Activated T-helper 1 cell treated with anti-CD3 and anti-CD28 coated beads, Interleukin-12 subunit alpha, Interleukin-12 subunit beta, Interleukin-2, Interleukin-4 antibody, amounts not matched to agents 30 ng/mL and 10 ng/mL and 1 ng/mL, durations not matched to agents 14 hours and 24 hours and 36 hours (primary cell): ENCODE measurements at regions of chr15 and their contacts with region 1.

Region 1: GRCh38 chr15:90869601-90870353 is 1.4 kb downstream of the FURIN start:
- DNase-seq: peak; percentile 61
- H3K4me3 Mint-ChIP-seq: peak overlapping the region; percentile 94
- H3K27ac Mint-ChIP-seq: peak overlapping the region; percentile 95
- H3K4me1 Mint-ChIP-seq: peaks cover 62% of the 10 kb centered on the region
- H3K27me3 Mint-ChIP-seq: no peaks in the 10 kb centered on the region

Region 2: DNA sequence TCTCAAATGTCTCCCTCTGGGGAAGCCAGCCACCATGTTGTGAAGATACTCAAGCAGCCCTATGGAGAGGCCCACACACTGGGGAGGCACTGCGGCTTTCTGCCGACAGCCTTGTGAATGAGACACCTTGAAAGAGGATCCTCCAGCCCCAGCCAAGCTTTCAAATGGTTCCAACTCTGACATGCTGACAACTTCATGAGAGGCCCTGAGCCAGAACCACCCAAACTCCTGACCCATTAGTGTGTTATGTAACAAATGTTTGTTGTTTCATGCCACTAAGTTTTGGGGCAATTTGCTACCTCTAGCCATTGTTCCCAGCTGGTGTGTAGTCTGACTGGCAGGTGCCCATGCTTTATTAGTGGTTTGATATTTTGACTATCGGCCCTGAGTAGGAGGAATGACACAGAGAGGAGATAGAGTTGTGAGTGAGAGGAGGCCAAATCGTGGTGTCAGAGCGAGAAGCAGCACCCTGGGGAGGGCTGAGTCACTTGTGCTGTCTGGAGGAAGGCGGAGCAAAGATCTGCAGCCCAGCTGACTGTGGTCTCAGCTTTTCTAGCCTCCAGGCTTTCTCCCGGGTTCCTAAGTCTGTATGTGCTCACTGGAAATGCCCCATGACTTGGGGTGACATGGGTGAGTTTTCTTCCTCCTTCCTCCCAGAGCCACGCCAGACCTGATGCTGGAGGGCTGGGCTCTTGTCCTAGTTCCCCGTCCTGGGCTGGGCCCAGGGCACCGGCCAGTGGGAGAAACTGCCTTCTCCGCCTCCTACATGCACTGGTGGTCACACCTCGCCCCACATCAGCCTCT is 209.4 kb before region 1 on chr15:
- intact Hi-C with region 1: loop called (anchors 1 kb)
- DNase-seq: peak; percentile 71
- H3K4me3 Mint-ChIP-seq: peak overlapping the region; percentile 77
- H3K27ac Mint-ChIP-seq: peak overlapping the region; percentile 96
- H3K4me1 Mint-ChIP-seq: peaks cover 81% of the 10 kb centered on the region
- H3K27me3 Mint-ChIP-seq: peaks cover 1% of the 10 kb centered on the region

Region 3: DNA sequence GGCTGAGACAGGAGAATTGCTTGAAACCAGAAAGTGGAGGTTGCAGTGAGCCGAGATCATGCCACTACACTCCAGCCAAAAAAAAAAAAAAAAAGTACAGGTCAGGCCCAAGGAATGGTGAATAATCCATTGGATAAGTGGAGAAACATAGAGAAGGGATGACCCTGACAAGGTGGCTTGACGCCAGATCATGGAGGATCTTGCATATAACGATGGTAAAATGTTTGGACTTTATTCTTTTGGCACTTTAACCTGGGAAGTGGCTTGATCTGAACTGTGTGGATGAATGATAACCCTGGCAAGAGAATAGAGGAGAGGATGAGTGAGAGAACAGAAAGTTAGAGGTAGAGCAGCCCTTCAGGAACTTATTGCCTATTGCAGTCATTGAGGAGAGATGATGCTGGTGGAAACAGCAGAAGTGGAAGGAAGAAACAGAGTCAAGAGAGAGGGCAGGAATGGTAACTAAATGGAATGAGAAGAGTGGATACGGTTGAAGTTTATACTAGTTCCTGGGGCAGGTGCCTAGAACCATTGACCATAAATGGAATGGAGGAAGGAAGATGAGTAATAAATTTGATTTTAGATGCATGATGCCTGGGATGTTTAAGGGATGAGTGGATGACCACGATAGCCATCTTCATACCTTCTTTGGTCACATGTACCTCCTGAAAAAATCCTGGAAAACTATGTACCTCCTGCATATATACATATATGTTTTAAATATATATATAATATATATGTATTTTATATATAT is 94.9 kb before region 1 on chr15:
- intact Hi-C with region 1: no loop called
- DNase-seq: no peak
- H3K4me3 Mint-ChIP-seq: no peak overlapping the region
- H3K27ac Mint-ChIP-seq: peak overlapping the region; percentile 54
- H3K4me1 Mint-ChIP-seq: peaks cover 24% of the 10 kb centered on the region
- H3K27me3 Mint-ChIP-seq: no peaks in the 10 kb centered on the region

Region 4: DNA sequence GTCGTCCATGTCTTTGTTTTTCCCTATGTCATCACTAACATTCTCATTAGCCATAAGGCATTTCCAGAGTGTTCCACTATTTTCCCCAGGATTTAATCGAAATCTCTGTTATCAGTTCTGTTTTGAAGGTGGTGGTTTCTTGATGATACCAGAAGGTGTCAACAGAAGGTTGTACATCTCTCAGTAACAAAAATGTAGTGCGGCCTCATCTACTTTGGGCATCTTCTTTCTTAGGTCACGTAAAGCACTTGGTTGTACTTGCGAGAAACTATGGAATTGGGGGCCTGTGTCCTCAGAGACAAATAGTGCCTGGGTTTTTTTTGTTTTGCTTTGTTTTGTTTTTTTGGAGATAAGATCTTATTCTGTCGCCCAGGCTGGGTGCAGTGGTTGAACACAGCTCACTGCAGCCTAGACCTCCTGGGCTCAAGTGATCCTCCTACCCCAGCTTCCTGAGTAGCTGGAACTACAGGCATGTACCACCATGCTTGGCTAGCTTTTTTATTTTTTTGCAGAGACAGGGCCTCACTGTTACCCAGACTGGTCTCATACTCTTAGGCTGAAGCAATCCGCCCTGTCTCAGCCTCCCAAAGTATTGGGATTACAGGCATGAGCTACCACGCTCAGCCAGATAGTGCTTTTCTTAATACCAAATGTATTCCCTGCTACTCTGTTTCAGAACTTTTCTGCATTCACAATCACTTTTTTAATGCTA is 62.5 kb before region 1 on chr15:
- intact Hi-C with region 1: loop called (anchors 2 kb)
- DNase-seq: no peak
- H3K4me3 Mint-ChIP-seq: peak overlapping the region; percentile 68
- H3K27ac Mint-ChIP-seq: peak overlapping the region; percentile 86
- H3K4me1 Mint-ChIP-seq: peaks cover 68% of the 10 kb centered on the region
- H3K27me3 Mint-ChIP-seq: no peaks in the 10 kb centered on the region

Region 5: GRCh38 chr15:90829942-90830440 is 39.8 kb before region 1 on chr15:
- intact Hi-C with region 1: loop called (anchors 1 kb)
- DNase-seq: peak; percentile 82
- H3K4me3 Mint-ChIP-seq: peak overlapping the region; percentile 75
- H3K27ac Mint-ChIP-seq: peak overlapping the region; percentile 91
- H3K4me1 Mint-ChIP-seq: peaks cover 69% of the 10 kb centered on the region
- H3K27me3 Mint-ChIP-seq: no peaks in the 10 kb centered on the region

Region 6: GRCh38 chr15:90851940-90852339 is 17.8 kb before region 1 on chr15:
- intact Hi-C with region 1: loop called (anchors 1 kb)
- DNase-seq: no peak
- H3K4me3 Mint-ChIP-seq: peak overlapping the region; percentile 63
- H3K27ac Mint-ChIP-seq: peak overlapping the region; percentile 96
- H3K4me1 Mint-ChIP-seq: peaks cover 67% of the 10 kb centered on the region
- H3K27me3 Mint-ChIP-seq: peaks cover 1% of the 10 kb centered on the region

Region 7: GRCh38 chr15:90902040-90902839 is 32.5 kb after region 1 on chr15:
- intact Hi-C with region 1: loop called (anchors 1 kb)
- DNase-seq: peak; percentile 69
- H3K4me3 Mint-ChIP-seq: peak overlapping the region; percentile 79
- H3K27ac Mint-ChIP-seq: peak overlapping the region; percentile 82
- H3K4me1 Mint-ChIP-seq: peaks cover 44% of the 10 kb centered on the region
- H3K27me3 Mint-ChIP-seq: no peaks in the 10 kb centered on the region